Activated T-helper 2 cell treated with anti-CD3 and anti-CD28 coated beads, Interferon-gamma antibody, Interleukin-2, Interleukin-4, amounts not matched to agents 10 μg/mL and 5 μg/mL and 100 μg/mL, durations not matched to agents 14 hours and 24 hours and 36 hours (primary cell): ENCODE measurements at regions of chr12 and their contacts with region 1.

Region 1: GRCh38 chr12:56117778-56118687 is at the start of gene ZC3H10:
- DNase-seq: peak; percentile 98
- H3K4me3 Mint-ChIP-seq: peak within 1 kb of the TSS; percentile 99
- H3K27ac Mint-ChIP-seq: peak within 1 kb of the TSS; percentile 99
- H3K4me1 Mint-ChIP-seq: peaks cover 27% of the 10 kb centered on the region
- H3K27me3 Mint-ChIP-seq: no peaks in the 10 kb centered on the region
- total RNA-seq, gene ZC3H10: 7.7 and 9.2 TPM in 2 replicates

Region 2: GRCh38 chr12:55973598-55974307 is 144.3 kb before region 1 on chr12 and contains the start of gene RAB5B:
- intact Hi-C with region 1: loop called (anchors 1 kb)
- DNase-seq: peak; percentile 99
- H3K4me3 Mint-ChIP-seq: no peak within 1 kb of the TSS
- H3K27ac Mint-ChIP-seq: no peak within 1 kb of the TSS
- H3K4me1 Mint-ChIP-seq: peaks cover 26% of the 10 kb centered on the region
- H3K27me3 Mint-ChIP-seq: no peaks in the 10 kb centered on the region
- total RNA-seq, gene RAB5B: 47.9 and 51.0 TPM in 2 replicates

Region 3: GRCh38 chr12:55985341-55985740 is 132.7 kb before region 1 on chr12:
- intact Hi-C with region 1: no loop called
- DNase-seq: no peak
- H3K4me3 Mint-ChIP-seq: no peak overlapping the region
- H3K27ac Mint-ChIP-seq: no peak overlapping the region
- H3K4me1 Mint-ChIP-seq: peaks cover 3% of the 10 kb centered on the region
- H3K27me3 Mint-ChIP-seq: no peaks in the 10 kb centered on the region

Region 4: DNA sequence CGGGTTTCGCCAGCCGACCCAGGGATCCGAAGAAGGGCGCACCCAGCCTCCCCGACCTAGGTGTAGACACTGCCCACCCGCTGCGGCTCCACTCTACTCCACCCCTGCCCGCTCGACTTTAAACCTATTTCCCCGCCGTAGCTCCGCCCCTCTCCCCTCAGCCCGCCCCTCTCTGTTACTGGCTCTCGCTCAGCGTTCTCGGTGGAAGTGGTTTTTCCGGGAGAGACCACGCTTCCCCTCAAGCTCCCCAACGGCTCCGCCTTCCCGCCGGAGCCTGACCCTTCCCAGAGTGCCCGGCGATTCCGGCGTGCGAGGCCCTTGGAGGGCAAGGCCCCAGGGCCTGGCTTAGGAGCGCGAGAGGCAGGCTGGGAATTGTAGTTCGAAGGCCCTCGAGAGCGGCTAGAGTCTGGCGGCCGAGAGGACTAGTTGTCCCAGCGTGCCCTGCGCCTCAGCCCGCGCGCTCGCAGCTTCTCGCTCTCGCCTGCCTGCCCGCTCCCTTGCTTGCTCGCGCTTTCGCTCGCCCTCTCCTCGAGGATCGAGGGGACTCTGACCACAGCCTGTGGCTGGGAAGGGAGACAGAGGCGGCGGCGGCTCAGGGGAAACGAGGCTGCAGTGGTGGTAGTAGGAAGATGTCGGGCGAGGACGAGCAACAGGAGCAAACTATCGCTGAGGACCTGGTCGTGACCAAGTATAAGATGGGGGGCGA is 13.8 kb before region 1 on chr12 and contains the start of gene PA2G4:
- intact Hi-C with region 1: loop called (anchors 1 kb)
- DNase-seq: peak; percentile 99
- H3K4me3 Mint-ChIP-seq: peak within 1 kb of the TSS; percentile 92
- H3K27ac Mint-ChIP-seq: peak within 1 kb of the TSS; percentile 95
- H3K4me1 Mint-ChIP-seq: peaks cover 51% of the 10 kb centered on the region
- H3K27me3 Mint-ChIP-seq: no peaks in the 10 kb centered on the region
- total RNA-seq, gene PA2G4: 356 and 364 TPM in 2 replicates

Region 5: DNA sequence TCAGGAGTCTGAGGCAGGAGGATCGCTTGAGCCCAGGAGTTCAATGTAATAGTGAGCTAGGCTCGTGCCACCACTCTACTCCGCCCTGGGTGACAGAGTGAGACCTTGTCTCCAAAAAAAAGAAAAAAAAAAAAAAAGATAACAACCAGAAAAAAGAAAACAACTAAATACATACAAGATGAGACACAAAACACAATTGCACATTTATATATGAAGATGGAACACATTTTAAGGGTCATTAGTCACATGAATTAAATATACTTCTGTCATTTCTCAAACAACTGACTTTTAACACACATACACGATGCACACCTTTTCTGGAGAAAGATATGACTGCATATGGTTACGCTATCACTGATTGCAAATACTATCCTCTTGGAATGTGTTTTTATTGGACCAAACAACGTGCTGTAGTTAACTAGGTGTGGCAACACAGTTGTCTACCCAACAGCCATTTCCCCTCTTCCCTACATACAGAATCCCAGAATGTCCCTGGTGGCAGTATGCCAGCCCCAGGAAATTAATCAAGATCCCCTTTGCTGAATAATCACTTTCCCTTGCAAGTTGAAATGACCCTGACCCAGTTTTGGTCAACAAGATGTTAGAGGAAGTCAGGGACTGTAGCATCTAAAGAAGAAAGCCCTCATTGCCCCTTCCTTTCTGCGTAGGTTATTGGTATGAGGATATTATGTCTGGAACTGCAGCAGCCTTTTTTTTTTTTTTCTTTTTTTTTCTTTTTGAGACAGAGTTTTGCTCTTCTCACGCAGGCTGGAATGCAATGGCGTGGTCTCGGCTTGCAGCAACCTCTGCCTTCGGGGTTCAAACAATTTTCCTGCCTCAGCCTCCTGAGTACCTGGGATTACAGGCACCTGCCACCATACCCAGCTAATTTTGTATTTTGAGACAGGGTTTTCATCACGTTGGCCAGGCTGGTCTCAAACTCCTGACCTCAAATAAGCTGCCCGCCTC is 28.7 kb after region 1 on chr12:
- intact Hi-C with region 1: no loop called
- DNase-seq: no peak
- H3K4me3 Mint-ChIP-seq: no peak overlapping the region
- H3K27ac Mint-ChIP-seq: no peak overlapping the region
- H3K4me1 Mint-ChIP-seq: peaks cover 29% of the 10 kb centered on the region
- H3K27me3 Mint-ChIP-seq: no peaks in the 10 kb centered on the region

Region 6: GRCh38 chr12:56158029-56158925 is 40.2 kb after region 1 on chr12 and contains the start of gene MYL6:
- intact Hi-C with region 1: loop called (anchors 2 kb)
- DNase-seq: peak; percentile 92
- H3K4me3 Mint-ChIP-seq: peak within 1 kb of the TSS; percentile 97
- H3K27ac Mint-ChIP-seq: peak within 1 kb of the TSS; percentile 91
- H3K4me1 Mint-ChIP-seq: peaks cover 54% of the 10 kb centered on the region
- H3K27me3 Mint-ChIP-seq: no peaks in the 10 kb centered on the region
- total RNA-seq, gene MYL6: 1,051 and 1,067 TPM in 2 replicates

Region 7: DNA sequence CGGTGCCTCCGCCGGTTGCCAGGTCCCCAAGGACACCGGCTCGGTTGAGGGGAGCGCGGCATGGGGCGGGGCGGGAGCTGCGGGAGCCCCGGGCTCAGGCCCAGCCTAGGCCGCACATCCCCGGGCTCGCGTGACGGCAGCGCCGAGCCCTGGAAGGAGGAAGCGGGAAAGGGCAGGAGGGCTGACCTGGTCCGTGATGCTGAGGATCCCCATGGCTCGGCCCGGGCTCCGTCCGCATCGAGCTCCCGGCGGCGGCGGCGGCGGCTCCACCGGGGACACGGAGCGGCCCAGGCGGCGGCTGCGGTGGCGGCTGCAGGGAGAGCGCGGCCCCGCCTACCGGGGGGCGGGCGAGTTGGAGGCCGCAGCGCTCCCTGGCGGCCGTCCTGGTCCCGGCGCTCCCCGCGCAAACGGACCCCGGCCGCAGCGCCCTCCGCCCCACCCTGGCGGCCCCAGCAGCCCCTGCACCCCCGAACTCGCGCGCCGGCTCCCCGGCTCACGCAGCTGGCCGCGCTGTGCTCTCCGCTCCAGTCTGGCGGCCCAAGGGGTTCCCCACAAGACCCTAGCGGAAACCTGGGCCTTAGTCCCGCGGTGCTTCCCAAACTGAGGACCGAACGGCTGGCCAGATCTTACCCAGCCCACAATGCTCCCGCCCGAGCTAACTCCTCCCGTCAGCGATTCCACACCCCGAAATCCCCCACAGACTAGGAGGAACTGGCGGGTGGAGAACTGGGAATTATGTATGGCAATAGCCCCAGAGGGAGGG is 140.2 kb after region 1 on chr12 and contains the start of gene ANKRD52:
- intact Hi-C with region 1: loop called (anchors 5 kb)
- DNase-seq: peak; percentile 80
- H3K4me3 Mint-ChIP-seq: peak within 1 kb of the TSS; percentile 87
- H3K27ac Mint-ChIP-seq: peak within 1 kb of the TSS; percentile 73
- H3K4me1 Mint-ChIP-seq: peaks cover 11% of the 10 kb centered on the region
- H3K27me3 Mint-ChIP-seq: no peaks in the 10 kb centered on the region
- total RNA-seq, gene ANKRD52: 66.0 and 78.0 TPM in 2 replicates

Region 8: DNA sequence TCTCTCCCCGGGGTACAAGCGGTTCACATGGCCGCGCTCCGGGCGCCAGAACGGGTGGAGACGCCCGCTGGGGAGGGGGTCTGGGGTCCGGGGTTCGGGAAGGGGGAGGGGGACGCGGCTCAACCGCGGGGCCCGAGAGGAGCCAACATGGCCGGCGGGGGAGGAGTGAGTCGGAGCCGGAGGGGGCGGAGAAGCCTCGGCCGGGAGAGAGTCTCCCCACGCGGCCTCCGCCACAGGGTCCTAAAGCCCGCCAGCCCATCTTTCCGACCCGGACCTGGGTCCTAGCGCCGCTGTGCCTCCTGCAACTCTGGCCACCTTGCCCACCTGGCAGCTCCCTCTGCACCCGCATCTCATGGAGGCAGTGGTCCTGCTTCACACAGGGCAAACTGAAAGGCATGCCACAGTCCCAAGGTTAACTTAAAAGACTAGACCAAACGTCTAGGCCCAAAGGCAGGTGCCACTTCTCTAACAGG is 512.2 kb after region 1 on chr12 and contains the start of gene BAZ2A:
- intact Hi-C with region 1: loop called (anchors 5 kb)
- DNase-seq: peak; percentile 81
- H3K4me3 Mint-ChIP-seq: peak within 1 kb of the TSS; percentile 99
- H3K27ac Mint-ChIP-seq: peak within 1 kb of the TSS; percentile 94
- H3K4me1 Mint-ChIP-seq: peaks cover 61% of the 10 kb centered on the region
- H3K27me3 Mint-ChIP-seq: no peaks in the 10 kb centered on the region
- total RNA-seq, gene BAZ2A: 124 and 131 TPM in 2 replicates